Caco-2 (cell line): ENCODE measurements at regions of chr12 and their contacts with region 1.

Region 1: GRCh38 chr12:16165506-16165905 is 112.0 kb downstream of the SLC15A5 start:
- DNase-seq: peak; percentile 54 to 58
- H3K4me3 ChIP-seq: no peak overlapping the region
- H3K4me3 Mint-ChIP-seq: no peak overlapping the region
- H3K27ac Mint-ChIP-seq: no peak overlapping the region
- H3K4me1 ChIP-seq: no peaks in the 10 kb centered on the region
- H3K4me1 Mint-ChIP-seq: no peaks in the 10 kb centered on the region
- H3K27me3 ChIP-seq: no peaks in the 10 kb centered on the region
- H3K27me3 Mint-ChIP-seq: peaks cover 12% of the 10 kb centered on the region
- CTCF ChIP-seq: peak; percentile 65 to 83

Region 2: DNA sequence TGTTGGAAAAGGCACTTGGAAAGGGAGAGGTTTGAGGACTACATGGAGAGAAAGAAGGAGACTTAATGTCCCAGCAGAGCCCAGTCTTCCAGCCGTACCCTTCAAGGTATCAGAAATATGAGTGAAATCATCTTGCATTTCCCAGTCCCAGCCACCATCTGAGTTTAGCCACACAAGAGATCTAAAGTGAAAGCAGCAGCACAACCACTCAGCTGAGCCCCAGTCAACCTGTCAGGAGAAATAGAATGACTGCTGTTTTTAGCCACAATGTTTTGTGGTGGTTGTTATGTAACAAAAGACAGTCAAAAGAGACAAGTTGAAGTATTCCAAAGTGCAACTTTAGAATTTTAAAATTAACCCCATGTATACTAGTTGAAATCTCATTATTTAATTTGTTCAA is 226.4 kb before region 1 on chr12:
- CTCF ChIA-PET with region 1: no interaction called
- POLR2A ChIA-PET with region 1: no interaction called
- intact Hi-C with region 1: no loop called
- DNase-seq: no peak
- H3K4me3 ChIP-seq: no peak overlapping the region
- H3K4me3 Mint-ChIP-seq: no peak overlapping the region
- H3K27ac Mint-ChIP-seq: no peak overlapping the region
- H3K4me1 ChIP-seq: no peaks in the 10 kb centered on the region
- H3K4me1 Mint-ChIP-seq: no peaks in the 10 kb centered on the region
- H3K27me3 ChIP-seq: no peaks in the 10 kb centered on the region
- H3K27me3 Mint-ChIP-seq: no peaks in the 10 kb centered on the region
- CTCF ChIP-seq: no peak

Region 3: GRCh38 chr12:15996254-15996653 is 169.3 kb before region 1 on chr12:
- CTCF ChIA-PET with region 1: no interaction called
- POLR2A ChIA-PET with region 1: no interaction called
- intact Hi-C with region 1: loop called (anchors 1 kb)
- DNase-seq: peak in 1 of 2 experiments; percentile 58
- H3K4me3 ChIP-seq: no peak overlapping the region
- H3K4me3 Mint-ChIP-seq: no peak overlapping the region
- H3K27ac Mint-ChIP-seq: no peak overlapping the region
- H3K4me1 ChIP-seq: no peaks in the 10 kb centered on the region; the same call in 1 of the 2 replicates
- H3K4me1 Mint-ChIP-seq: peaks cover 4% of the 10 kb centered on the region
- H3K27me3 ChIP-seq: no peaks in the 10 kb centered on the region
- H3K27me3 Mint-ChIP-seq: no peaks in the 10 kb centered on the region
- CTCF ChIP-seq: peak; percentile 34 to 51

Region 4: DNA sequence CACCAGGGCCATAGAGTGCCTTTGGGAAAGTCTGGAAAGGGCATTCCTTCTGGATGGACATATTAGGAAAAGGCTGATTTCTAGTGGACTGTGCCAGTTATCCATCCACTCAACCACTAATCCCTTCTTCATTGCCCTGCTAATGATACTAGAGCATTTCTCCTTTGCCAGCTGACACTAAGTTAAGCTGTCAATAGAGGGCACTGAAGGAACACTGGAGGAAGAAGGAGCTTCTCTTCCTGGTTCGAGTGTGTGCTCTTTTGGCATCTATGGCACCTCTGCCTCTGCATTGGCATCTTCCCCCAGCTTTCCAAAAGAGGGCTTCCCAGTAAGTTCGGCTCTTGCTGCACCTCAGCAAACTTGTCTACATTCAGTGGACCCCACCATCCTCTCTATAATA is 89.0 kb before region 1 on chr12:
- CTCF ChIA-PET with region 1: interaction called, 3 read pairs
- POLR2A ChIA-PET with region 1: no interaction called
- intact Hi-C with region 1: loop called (anchors 1 kb)
- DNase-seq: peak in 1 of 2 experiments; percentile 38
- H3K4me3 ChIP-seq: no peak overlapping the region
- H3K4me3 Mint-ChIP-seq: no peak overlapping the region
- H3K27ac Mint-ChIP-seq: no peak overlapping the region
- H3K4me1 ChIP-seq: peaks cover 7% of the 10 kb centered on the region
- H3K4me1 Mint-ChIP-seq: no peaks in the 10 kb centered on the region
- H3K27me3 ChIP-seq: no peaks in the 10 kb centered on the region
- H3K27me3 Mint-ChIP-seq: peaks cover 6% of the 10 kb centered on the region
- CTCF ChIP-seq: peak; percentile 60 to 63

Region 5: DNA sequence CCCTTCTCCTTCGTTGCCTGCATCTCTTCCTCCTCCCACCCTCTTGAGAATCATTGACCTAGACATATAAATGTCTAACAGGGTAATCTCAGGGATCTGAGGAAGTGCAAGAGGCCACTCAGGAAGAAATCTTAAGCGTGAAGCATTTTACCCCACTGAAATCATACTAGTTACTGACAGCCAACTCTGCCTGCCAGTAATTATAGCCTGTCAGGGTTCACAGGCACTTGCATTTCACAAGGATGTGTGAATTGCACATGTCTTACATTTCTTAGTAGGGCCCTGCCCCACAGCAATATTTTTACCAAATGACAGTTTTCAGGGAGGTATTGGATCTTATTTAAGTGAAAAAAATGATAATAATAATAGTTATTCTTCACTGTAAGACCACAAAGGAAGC is 15.2 kb before region 1 on chr12:
- CTCF ChIA-PET with region 1: no interaction called
- POLR2A ChIA-PET with region 1: no interaction called
- intact Hi-C with region 1: no loop called
- DNase-seq: no peak
- H3K4me3 ChIP-seq: no peak overlapping the region
- H3K4me3 Mint-ChIP-seq: no peak overlapping the region
- H3K27ac Mint-ChIP-seq: no peak overlapping the region
- H3K4me1 ChIP-seq: no peaks in the 10 kb centered on the region
- H3K4me1 Mint-ChIP-seq: no peaks in the 10 kb centered on the region
- H3K27me3 ChIP-seq: no peaks in the 10 kb centered on the region
- H3K27me3 Mint-ChIP-seq: peaks cover 6% of the 10 kb centered on the region
- CTCF ChIP-seq: no peak

Region 6: DNA sequence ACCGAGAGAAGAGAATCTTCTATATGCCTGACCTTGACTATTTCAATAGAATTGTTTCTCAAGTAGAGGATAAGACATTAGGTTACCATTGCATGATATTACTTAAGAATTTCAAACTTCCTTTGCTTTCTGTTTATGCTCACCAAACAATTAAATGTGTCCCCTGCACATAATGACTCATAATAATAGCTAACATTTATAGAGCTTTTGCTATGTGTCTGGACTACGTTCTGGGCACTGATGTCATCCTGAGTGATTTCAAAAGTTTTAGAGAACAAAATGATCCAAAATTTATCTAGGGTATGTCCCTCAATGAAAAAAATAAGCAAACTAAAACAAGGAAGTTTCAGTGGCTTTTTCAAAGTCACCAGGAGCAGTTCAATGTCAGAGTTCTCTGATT is 73.2 kb after region 1 on chr12:
- CTCF ChIA-PET with region 1: no interaction called
- POLR2A ChIA-PET with region 1: no interaction called
- intact Hi-C with region 1: no loop called
- DNase-seq: no peak
- H3K4me3 ChIP-seq: no peak overlapping the region
- H3K4me3 Mint-ChIP-seq: no peak overlapping the region
- H3K27ac Mint-ChIP-seq: no peak overlapping the region
- H3K4me1 ChIP-seq: no peaks in the 10 kb centered on the region
- H3K4me1 Mint-ChIP-seq: no peaks in the 10 kb centered on the region
- H3K27me3 ChIP-seq: no peaks in the 10 kb centered on the region
- H3K27me3 Mint-ChIP-seq: peaks cover 2% of the 10 kb centered on the region
- CTCF ChIP-seq: no peak

Region 7: DNA sequence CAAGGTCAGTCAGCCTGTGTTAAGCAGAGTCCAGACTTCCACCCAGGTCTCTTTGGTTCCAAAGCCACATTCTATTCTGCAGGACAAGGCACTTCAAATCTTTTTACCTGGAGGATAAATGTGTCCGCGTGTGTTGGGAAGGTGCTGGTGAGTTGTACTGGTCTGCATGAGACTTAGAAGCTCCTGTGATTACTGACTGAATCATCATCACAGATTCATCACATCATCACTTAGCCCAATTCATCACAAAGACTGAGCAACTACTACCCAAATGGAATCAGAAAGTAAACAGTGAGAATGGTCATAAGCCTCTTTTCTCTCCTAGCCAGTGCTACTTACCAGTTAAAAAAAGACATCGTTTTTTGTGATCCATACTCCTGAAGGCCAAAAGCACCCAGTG is 106.7 kb after region 1 on chr12:
- CTCF ChIA-PET with region 1: no interaction called
- POLR2A ChIA-PET with region 1: no interaction called
- intact Hi-C with region 1: loop called (anchors 5 kb)
- DNase-seq: no peak
- H3K4me3 ChIP-seq: no peak overlapping the region
- H3K4me3 Mint-ChIP-seq: no peak overlapping the region
- H3K27ac Mint-ChIP-seq: no peak overlapping the region
- H3K4me1 ChIP-seq: no peaks in the 10 kb centered on the region
- H3K4me1 Mint-ChIP-seq: no peaks in the 10 kb centered on the region
- H3K27me3 ChIP-seq: no peaks in the 10 kb centered on the region
- H3K27me3 Mint-ChIP-seq: peaks cover 5% of the 10 kb centered on the region
- CTCF ChIP-seq: no peak

Region 8: GRCh38 chr12:16359512-16360491 is 194.3 kb after region 1 on chr12:
- CTCF ChIA-PET with region 1: no interaction called
- POLR2A ChIA-PET with region 1: no interaction called
- intact Hi-C with region 1: loop called (anchors 1 kb)
- DNase-seq: peak; percentile 79 to 87
- H3K4me3 ChIP-seq: no peak overlapping the region
- H3K4me3 Mint-ChIP-seq: no peak overlapping the region
- H3K27ac Mint-ChIP-seq: no peak overlapping the region
- H3K4me1 ChIP-seq: no peaks in the 10 kb centered on the region
- H3K4me1 Mint-ChIP-seq: no peaks in the 10 kb centered on the region
- H3K27me3 ChIP-seq: no peaks in the 10 kb centered on the region
- H3K27me3 Mint-ChIP-seq: no peaks in the 10 kb centered on the region
- CTCF ChIP-seq: peak; percentile 95 to 98

Region 9: GRCh38 chr12:16385782-16386646 is 220.5 kb after region 1 on chr12:
- CTCF ChIA-PET with region 1: interaction called, 3 read pairs
- POLR2A ChIA-PET with region 1: no interaction called
- intact Hi-C with region 1: loop called (anchors 1 kb)
- DNase-seq: peak; percentile 75 to 78
- H3K4me3 ChIP-seq: no peak overlapping the region
- H3K4me3 Mint-ChIP-seq: no peak overlapping the region
- H3K27ac Mint-ChIP-seq: no peak overlapping the region
- H3K4me1 ChIP-seq: peaks cover 8% of the 10 kb centered on the region; the same call in 1 of the 2 replicates
- H3K4me1 Mint-ChIP-seq: peaks cover 9% of the 10 kb centered on the region
- H3K27me3 ChIP-seq: no peaks in the 10 kb centered on the region
- H3K27me3 Mint-ChIP-seq: no peaks in the 10 kb centered on the region
- CTCF ChIP-seq: peak; percentile 74 to 82